A673 (cell line): ENCODE measurements at regions of chr1 and their contacts with region 1.

Region 1: DNA sequence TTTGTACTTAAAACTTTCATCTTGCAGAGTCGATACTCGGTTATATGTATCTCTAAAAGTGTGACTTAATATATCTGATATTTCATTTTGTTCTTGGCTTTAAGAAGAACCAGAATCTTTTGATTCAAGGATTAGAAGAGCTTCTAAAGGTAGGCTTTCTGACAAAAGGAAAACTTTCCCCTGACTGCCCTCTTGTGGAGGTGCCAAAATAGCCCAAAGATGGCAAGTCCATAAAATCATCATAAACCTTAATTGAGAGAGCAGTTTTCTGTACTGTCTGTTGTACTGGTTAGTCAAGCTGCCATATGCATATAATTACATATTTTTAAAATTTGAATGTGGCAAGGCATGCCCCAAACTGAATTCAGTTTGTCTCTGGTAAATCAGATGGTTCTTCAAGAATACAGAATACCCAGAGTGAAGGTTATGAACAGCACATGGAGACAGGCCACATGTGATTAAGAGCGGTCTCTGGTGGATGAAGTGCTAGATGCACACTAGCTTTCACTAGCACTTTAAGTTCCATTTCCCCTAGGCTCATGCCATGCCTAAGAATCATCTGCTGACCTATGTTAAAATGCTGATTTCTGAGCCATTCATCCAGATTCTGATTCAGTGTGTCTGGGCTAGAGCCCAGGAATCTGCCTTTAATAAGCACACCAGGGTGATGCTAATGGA is 27.7 kb upstream of the ELAVL4 start:
- DNase-seq: peak; percentile 45
- H3K4me3 ChIP-seq: no peak overlapping the region
- H3K27ac ChIP-seq: no peak overlapping the region
- H3K4me1 ChIP-seq: no peaks in the 10 kb centered on the region
- H3K27me3 ChIP-seq: no peaks in the 10 kb centered on the region
- CTCF ChIP-seq: peak; percentile 65

Region 2: GRCh38 chr1:49906365-49906764 is 174.7 kb before region 1 on chr1:
- CTCF ChIA-PET with region 1: no interaction called
- POLR2A ChIA-PET with region 1: no interaction called
- intact Hi-C with region 1: no loop called
- DNase-seq: no peak
- H3K4me3 ChIP-seq: no peak overlapping the region
- H3K27ac ChIP-seq: no peak overlapping the region
- H3K4me1 ChIP-seq: no peaks in the 10 kb centered on the region
- H3K27me3 ChIP-seq: no peaks in the 10 kb centered on the region
- CTCF ChIP-seq: no peak

Region 3: GRCh38 chr1:49971088-49971487 is 110.0 kb before region 1 on chr1:
- CTCF ChIA-PET with region 1: no interaction called
- POLR2A ChIA-PET with region 1: no interaction called
- intact Hi-C with region 1: no loop called
- DNase-seq: no peak
- H3K4me3 ChIP-seq: no peak overlapping the region
- H3K27ac ChIP-seq: no peak overlapping the region
- H3K4me1 ChIP-seq: no peaks in the 10 kb centered on the region
- H3K27me3 ChIP-seq: peaks cover 11% of the 10 kb centered on the region
- CTCF ChIP-seq: no peak

Region 4: GRCh38 chr1:50332941-50333594 is 252.0 kb after region 1 on chr1:
- CTCF ChIA-PET with region 1: no interaction called
- POLR2A ChIA-PET with region 1: no interaction called
- intact Hi-C with region 1: loop called (anchors 10 kb)
- DNase-seq: peak; percentile 68
- H3K4me3 ChIP-seq: peak overlapping the region; percentile 62
- H3K27ac ChIP-seq: peak overlapping the region; percentile 53
- H3K4me1 ChIP-seq: no peaks in the 10 kb centered on the region
- H3K27me3 ChIP-seq: no peaks in the 10 kb centered on the region
- CTCF ChIP-seq: peak; percentile 81